ENCODE measurements at regions of chr1 and their contacts with region 1.

Region 1: GRCh38 chr1:40849801-40850592 is 12.2 kb downstream of the CITED4 start:
- DNase-seq: no peak
- ATAC-seq: peak; percentile 89
- H3K4me3 ChIP-seq: no peak overlapping the region
- H3K27ac ChIP-seq: peak overlapping the region; percentile 49; the same call in 1 of the 2 replicates
- H3K4me1 ChIP-seq: no peaks in the 10 kb centered on the region
- H3K27me3 ChIP-seq: no peaks in the 10 kb centered on the region
- CTCF ChIP-seq: peak; percentile 93

Region 2: DNA sequence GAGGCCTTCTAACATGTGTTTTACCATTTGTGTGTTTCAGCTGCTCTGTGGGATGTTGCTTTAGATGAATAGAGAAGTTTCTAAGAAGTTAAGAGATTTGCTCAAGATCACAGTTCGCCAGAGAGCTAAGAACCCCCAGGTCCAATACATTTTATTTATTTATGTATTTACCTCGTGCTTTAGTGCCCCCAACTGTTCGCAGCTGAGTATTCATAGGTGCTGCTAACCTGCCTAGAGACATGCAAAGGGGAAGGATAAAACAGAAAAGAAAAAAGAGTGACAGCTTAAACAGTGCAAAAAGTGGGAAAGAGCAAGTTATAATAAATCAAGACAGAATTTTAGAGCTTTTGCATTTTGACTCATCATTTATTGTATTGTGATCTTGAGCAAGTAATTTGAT is 127.4 kb before region 1 on chr1:
- CTCF ChIA-PET with region 1: no interaction called
- POLR2A ChIA-PET with region 1: no interaction called
- in situ Hi-C with region 1: no loop called
- intact Hi-C with region 1: no loop called
- DNase-seq: no peak
- ATAC-seq: no peak; the same call in 1 of the 2 replicates
- H3K4me3 ChIP-seq: no peak overlapping the region
- H3K27ac ChIP-seq: no peak overlapping the region
- H3K4me1 ChIP-seq: no peaks in the 10 kb centered on the region
- H3K27me3 ChIP-seq: no peaks in the 10 kb centered on the region
- CTCF ChIP-seq: no peak; the same call in 1 of the 2 replicates

Region 3: DNA sequence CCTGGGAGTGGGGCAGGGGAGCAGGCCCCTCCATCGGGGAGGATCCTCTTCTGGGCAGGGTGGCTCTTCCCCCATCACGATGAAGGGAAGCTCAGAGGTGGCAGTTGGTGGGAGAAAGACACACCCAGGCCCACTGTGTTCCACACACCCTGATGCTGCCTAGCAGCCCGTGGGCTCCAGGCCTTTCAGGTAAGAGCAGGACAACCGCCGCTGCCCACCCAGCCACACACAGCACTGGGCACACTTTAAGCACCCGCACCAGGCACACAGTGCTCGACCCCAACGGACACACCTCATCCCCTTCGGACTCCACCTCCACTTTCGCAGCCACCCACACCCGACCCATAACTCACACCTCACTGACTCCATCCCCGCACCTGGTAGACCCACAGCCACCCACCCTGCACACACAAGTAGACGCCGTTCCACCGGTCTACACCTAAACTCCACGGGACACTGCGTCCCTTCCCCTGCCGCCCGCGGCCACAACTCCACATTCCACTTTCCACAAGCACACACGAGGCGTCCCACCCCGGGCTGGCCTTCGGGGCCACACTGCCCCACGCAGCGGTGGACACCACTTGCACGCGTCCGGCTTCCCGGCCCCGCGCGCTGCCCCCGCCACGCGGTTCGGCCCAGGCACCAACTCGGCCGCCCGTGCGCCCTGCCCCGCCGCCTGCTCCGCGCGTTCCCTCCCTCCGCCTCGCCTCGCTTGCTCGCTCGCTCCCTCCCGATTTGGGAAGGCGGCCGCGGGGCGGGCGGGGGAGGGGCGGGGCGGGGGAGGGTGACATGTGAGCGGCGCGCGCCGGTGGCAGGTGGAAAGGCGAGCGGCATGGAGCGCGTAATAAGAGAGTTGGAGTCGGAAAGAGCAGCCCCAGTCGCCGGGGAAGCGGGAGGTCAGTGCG is 66.7 kb before region 1 on chr1 and contains the start of gene KCNQ4:
- CTCF ChIA-PET with region 1: interaction called, 3 read pairs
- POLR2A ChIA-PET with region 1: no interaction called
- in situ Hi-C with region 1: no loop called
- intact Hi-C with region 1: loop called (anchors 5 kb)
- DNase-seq: no peak
- ATAC-seq: peak; percentile 40
- H3K4me3 ChIP-seq: peak within 1 kb of the TSS; percentile 32 to 45
- H3K27ac ChIP-seq: peak within 1 kb of the TSS; percentile 34; the same call in 1 of the 2 replicates
- H3K4me1 ChIP-seq: peaks cover 23% of the 10 kb centered on the region
- H3K27me3 ChIP-seq: no peaks in the 10 kb centered on the region
- CTCF ChIP-seq: no peak
- total RNA-seq, gene KCNQ4: 2.6 TPM

Region 4: GRCh38 chr1:41032147-41032546 is 182.2 kb after region 1 on chr1:
- CTCF ChIA-PET with region 1: no interaction called
- POLR2A ChIA-PET with region 1: interaction called, 11 read pairs
- in situ Hi-C with region 1: no loop called
- intact Hi-C with region 1: no loop called
- DNase-seq: no peak
- ATAC-seq: no peak
- H3K4me3 ChIP-seq: no peak overlapping the region
- H3K27ac ChIP-seq: no peak overlapping the region
- H3K4me1 ChIP-seq: no peaks in the 10 kb centered on the region; the same call in 1 of the 2 replicates
- H3K27me3 ChIP-seq: no peaks in the 10 kb centered on the region
- CTCF ChIP-seq: no peak